CD4-positive, alpha-beta T cell (primary cell): ENCODE measurements at regions of chr2 and their contacts with region 1.

Region 1: DNA sequence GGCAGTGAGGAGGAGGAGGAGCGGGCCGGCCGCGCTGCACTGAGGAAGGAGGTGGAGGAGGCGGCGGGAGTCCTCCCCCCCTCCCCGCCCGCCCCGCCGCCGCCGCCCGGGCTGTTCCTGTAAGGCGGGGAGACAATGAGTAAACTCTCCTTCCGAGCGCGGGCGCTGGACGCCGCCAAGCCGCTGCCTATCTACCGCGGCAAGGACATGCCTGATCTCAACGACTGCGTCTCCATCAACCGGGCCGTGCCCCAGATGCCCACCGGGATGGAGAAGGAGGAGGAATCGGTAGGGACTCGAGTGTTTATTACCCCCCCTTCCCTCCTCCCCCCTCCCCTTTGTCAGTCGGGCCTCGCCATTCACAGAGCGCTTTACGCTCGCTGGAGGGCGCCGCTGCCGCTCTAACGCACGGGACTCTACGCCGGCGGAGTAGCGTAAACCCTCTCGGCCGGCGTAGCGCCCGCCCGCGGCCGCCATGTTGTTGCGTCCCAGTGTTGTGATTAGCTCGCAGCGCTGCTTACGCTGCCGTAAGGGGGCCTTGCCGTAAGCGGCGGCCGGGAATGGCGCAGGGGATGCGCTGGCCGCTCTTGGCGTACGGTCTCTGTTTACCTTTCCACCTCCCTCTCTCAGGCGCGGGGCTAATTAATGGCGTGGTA is 460 bp downstream of the EPC2 start:
- DNase-seq: peak; percentile 86 to 98 (median 94)
- ATAC-seq: peak; percentile 73
- H3K4me3 ChIP-seq: peak overlapping the region; percentile 93
- H3K4me3 Mint-ChIP-seq: peak overlapping the region; percentile 92
- H3K27ac ChIP-seq: peak overlapping the region; percentile 97 to 98
- H3K27ac Mint-ChIP-seq: peak overlapping the region; percentile 93
- H3K4me1 ChIP-seq: peaks cover 20% of the 10 kb centered on the region
- H3K4me1 Mint-ChIP-seq: peaks cover 40% of the 10 kb centered on the region
- H3K27me3 ChIP-seq: no peaks in the 10 kb centered on the region
- H3K27me3 Mint-ChIP-seq: no peaks in the 10 kb centered on the region
- CTCF ChIP-seq: no peak

Region 2: DNA sequence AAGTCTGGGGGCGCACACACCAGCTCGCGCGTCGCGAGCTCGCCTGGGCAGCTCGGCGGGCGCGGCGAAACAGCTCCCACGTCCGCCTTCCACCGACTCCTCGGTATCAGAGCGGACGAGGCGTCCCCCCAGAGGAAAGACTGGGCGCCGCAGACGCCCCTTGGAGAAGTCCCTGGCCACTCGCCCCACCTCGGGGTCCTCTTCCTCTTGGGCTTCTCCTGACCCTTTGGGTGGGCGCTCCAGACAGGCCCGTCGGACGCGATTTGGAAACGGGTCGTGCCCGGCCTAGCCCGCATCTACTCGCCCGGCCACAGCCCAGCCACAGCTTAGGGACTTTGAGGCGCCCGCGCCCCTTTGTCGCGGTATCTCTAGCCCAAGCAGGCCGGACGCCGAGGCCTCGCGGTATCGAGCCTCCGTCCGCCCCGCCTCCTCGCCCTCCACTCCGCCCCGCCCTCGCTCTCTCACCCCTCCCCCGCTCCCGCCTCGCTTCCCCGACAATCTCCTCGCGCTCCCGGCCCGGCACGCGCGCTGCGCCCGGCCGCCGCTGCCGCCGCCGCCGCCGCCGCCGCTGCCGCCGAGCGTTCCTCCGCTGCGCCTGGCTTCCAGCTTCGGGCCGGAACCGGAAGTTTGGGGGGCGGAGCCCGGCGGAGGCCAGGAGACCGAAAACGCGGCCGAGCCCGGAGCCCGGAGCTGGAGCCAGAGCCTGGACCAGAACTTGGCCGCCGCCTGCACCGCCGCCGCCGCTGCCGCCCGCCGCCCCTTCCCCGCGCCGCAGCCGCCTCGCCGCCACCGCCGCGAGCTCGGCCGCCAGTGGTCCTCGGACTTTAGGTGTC is 800.9 kb before region 1 on chr2:
- CTCF ChIA-PET with region 1: no interaction called
- POLR2A ChIA-PET with region 1: interaction called, 5 read pairs
- intact Hi-C with region 1: loop called in 1 of 2 experiments (anchors 10 kb)
- DNase-seq: peak; percentile 80 to 94 (median 84)
- ATAC-seq: peak; percentile 79
- H3K4me3 ChIP-seq: peak overlapping the region; percentile 84
- H3K4me3 Mint-ChIP-seq: peak overlapping the region; percentile 96
- H3K27ac ChIP-seq: peak overlapping the region in 1 of 2 donors; percentile 38
- H3K27ac Mint-ChIP-seq: peak overlapping the region; percentile 87
- H3K4me1 ChIP-seq: peaks cover 19% of the 10 kb centered on the region
- H3K4me1 Mint-ChIP-seq: peaks cover 42% of the 10 kb centered on the region
- H3K27me3 ChIP-seq: no peaks in the 10 kb centered on the region
- H3K27me3 Mint-ChIP-seq: peaks cover 5% of the 10 kb centered on the region
- CTCF ChIP-seq: no peak

Region 3: GRCh38 chr2:148110184-148110583 is 534.8 kb before region 1 on chr2:
- CTCF ChIA-PET with region 1: no interaction called
- POLR2A ChIA-PET with region 1: no interaction called
- intact Hi-C with region 1: no loop called
- DNase-seq: no peak
- ATAC-seq: no peak
- H3K4me3 ChIP-seq: no peak overlapping the region
- H3K4me3 Mint-ChIP-seq: no peak overlapping the region
- H3K27ac ChIP-seq: no peak overlapping the region
- H3K27ac Mint-ChIP-seq: peak overlapping the region; percentile 4
- H3K4me1 ChIP-seq: no peaks in the 10 kb centered on the region
- H3K4me1 Mint-ChIP-seq: peaks cover 15% of the 10 kb centered on the region
- H3K27me3 ChIP-seq: no peaks in the 10 kb centered on the region
- H3K27me3 Mint-ChIP-seq: no peaks in the 10 kb centered on the region
- CTCF ChIP-seq: no peak

Region 4: GRCh38 chr2:148524519-148524919 is 120.5 kb before region 1 on chr2:
- CTCF ChIA-PET with region 1: no interaction called
- POLR2A ChIA-PET with region 1: interaction called, 82 read pairs
- intact Hi-C with region 1: loop called (anchors 1 to 5 kb)
- DNase-seq: peak in 13 of 14 experiments; percentile 30 to 89 (median 59)
- ATAC-seq: peak; percentile 92
- H3K4me3 ChIP-seq: no peak overlapping the region
- H3K4me3 Mint-ChIP-seq: peak overlapping the region; percentile 71
- H3K27ac ChIP-seq: peak overlapping the region; percentile 56 to 64
- H3K27ac Mint-ChIP-seq: peak overlapping the region; percentile 85
- H3K4me1 ChIP-seq: peaks cover 84% of the 10 kb centered on the region
- H3K4me1 Mint-ChIP-seq: peaks cover 90% of the 10 kb centered on the region
- H3K27me3 ChIP-seq: no peaks in the 10 kb centered on the region
- H3K27me3 Mint-ChIP-seq: no peaks in the 10 kb centered on the region
- CTCF ChIP-seq: no peak

Region 5: GRCh38 chr2:148658807-148659722 is 14.1 kb after region 1 on chr2:
- CTCF ChIA-PET with region 1: interaction called, 3 read pairs
- POLR2A ChIA-PET with region 1: interaction called, 44 read pairs
- intact Hi-C with region 1: loop called in 1 of 2 experiments (anchors 1 kb)
- DNase-seq: peak in 3 of 14 experiments; percentile 70 to 77 (median 76)
- ATAC-seq: peak; percentile 88
- H3K4me3 ChIP-seq: no peak overlapping the region
- H3K4me3 Mint-ChIP-seq: peak overlapping the region; percentile 69
- H3K27ac ChIP-seq: peak overlapping the region; percentile 10 to 36
- H3K27ac Mint-ChIP-seq: peak overlapping the region; percentile 80
- H3K4me1 ChIP-seq: peaks cover 10% of the 10 kb centered on the region
- H3K4me1 Mint-ChIP-seq: peaks cover 91% of the 10 kb centered on the region
- H3K27me3 ChIP-seq: no peaks in the 10 kb centered on the region
- H3K27me3 Mint-ChIP-seq: no peaks in the 10 kb centered on the region
- CTCF ChIP-seq: no peak

Region 6: DNA sequence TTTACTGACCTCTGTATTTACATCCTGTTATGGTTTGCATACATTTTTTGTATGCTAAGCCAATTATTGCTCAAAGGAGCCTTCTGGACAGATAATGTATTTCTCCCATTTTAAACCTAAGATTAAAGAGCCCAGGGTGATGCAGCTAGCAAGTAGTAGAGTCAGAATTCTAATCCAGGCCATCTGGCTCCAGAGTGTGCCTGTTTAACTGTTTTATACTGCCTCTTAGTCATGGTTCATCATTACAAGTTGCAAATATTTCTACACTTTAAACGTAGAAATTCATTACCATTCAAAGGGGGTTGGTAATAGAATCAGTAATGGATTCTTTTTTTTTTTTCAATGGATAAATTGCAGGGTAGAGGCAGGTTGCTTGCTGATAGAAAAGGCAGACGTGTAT is 52.0 kb after region 1 on chr2:
- CTCF ChIA-PET with region 1: no interaction called
- POLR2A ChIA-PET with region 1: interaction called, 5 read pairs
- intact Hi-C with region 1: loop called in 1 of 2 experiments (anchors 10 kb)
- DNase-seq: no peak
- ATAC-seq: no peak
- H3K4me3 ChIP-seq: no peak overlapping the region
- H3K4me3 Mint-ChIP-seq: no peak overlapping the region
- H3K27ac ChIP-seq: no peak overlapping the region
- H3K27ac Mint-ChIP-seq: peak overlapping the region; percentile 1
- H3K4me1 ChIP-seq: no peaks in the 10 kb centered on the region
- H3K4me1 Mint-ChIP-seq: peaks cover 46% of the 10 kb centered on the region
- H3K27me3 ChIP-seq: no peaks in the 10 kb centered on the region
- H3K27me3 Mint-ChIP-seq: no peaks in the 10 kb centered on the region
- CTCF ChIP-seq: no peak

Region 7: GRCh38 chr2:148764815-148765214 is 119.8 kb after region 1 on chr2:
- CTCF ChIA-PET with region 1: no interaction called
- POLR2A ChIA-PET with region 1: interaction called, 4 read pairs
- intact Hi-C with region 1: loop called (anchors 5 to 10 kb)
- DNase-seq: peak in 3 of 14 experiments; percentile 24 to 60 (median 51)
- ATAC-seq: peak; percentile 78
- H3K4me3 ChIP-seq: no peak overlapping the region
- H3K4me3 Mint-ChIP-seq: peak overlapping the region; percentile 27
- H3K27ac ChIP-seq: no peak overlapping the region
- H3K27ac Mint-ChIP-seq: peak overlapping the region; percentile 7
- H3K4me1 ChIP-seq: peaks cover 3% of the 10 kb centered on the region
- H3K4me1 Mint-ChIP-seq: peaks cover 52% of the 10 kb centered on the region
- H3K27me3 ChIP-seq: no peaks in the 10 kb centered on the region
- H3K27me3 Mint-ChIP-seq: no peaks in the 10 kb centered on the region
- CTCF ChIP-seq: no peak

Region 8: GRCh38 chr2:149579972-149580882 is 935.2 kb after region 1 on chr2:
- CTCF ChIA-PET with region 1: no interaction called
- POLR2A ChIA-PET with region 1: no interaction called
- intact Hi-C with region 1: loop called in 1 of 2 experiments (anchors 5 kb)
- DNase-seq: no peak
- ATAC-seq: no peak
- H3K4me3 ChIP-seq: no peak overlapping the region
- H3K4me3 Mint-ChIP-seq: no peak overlapping the region
- H3K27ac ChIP-seq: no peak overlapping the region
- H3K27ac Mint-ChIP-seq: peak overlapping the region; percentile 39
- H3K4me1 ChIP-seq: peaks cover 8% of the 10 kb centered on the region
- H3K4me1 Mint-ChIP-seq: peaks cover 68% of the 10 kb centered on the region
- H3K27me3 ChIP-seq: no peaks in the 10 kb centered on the region
- H3K27me3 Mint-ChIP-seq: no peaks in the 10 kb centered on the region
- CTCF ChIP-seq: no peak

Region 9: DNA sequence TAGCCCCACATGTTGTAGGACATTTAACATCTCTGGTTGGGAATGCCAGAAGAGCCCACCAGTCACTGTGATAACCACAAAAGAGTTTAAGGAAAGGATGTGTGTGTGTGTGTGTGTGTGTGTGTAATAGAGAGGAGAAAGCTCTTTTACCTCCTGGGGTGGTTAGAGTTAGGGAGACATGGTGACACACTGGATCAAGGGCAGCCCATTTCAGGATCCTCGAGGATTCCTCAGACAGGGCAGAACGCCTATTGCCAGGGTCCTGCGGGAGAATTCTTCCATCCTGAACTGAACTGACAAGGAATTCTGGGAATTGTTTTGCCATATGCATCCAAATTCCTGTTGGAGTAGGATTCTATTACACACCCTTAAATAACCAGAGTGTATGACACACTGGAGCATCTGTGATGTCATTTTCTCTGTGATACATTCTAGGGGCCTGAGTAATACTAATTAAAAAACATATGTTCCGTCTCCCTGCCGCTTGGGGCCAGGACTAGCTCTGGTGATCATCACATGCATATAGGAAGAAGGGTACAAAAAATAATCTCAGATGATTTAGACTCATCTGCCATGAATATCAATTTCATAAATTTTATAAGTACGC is 1098.9 kb after region 1 on chr2:
- CTCF ChIA-PET with region 1: no interaction called
- POLR2A ChIA-PET with region 1: no interaction called
- intact Hi-C with region 1: no loop called
- DNase-seq: no peak
- ATAC-seq: no peak
- H3K4me3 ChIP-seq: no peak overlapping the region
- H3K4me3 Mint-ChIP-seq: no peak overlapping the region
- H3K27ac ChIP-seq: no peak overlapping the region
- H3K27ac Mint-ChIP-seq: no peak overlapping the region
- H3K4me1 ChIP-seq: no peaks in the 10 kb centered on the region
- H3K4me1 Mint-ChIP-seq: no peaks in the 10 kb centered on the region
- H3K27me3 ChIP-seq: no peaks in the 10 kb centered on the region
- H3K27me3 Mint-ChIP-seq: no peaks in the 10 kb centered on the region
- CTCF ChIP-seq: no peak